Ascending aorta (tissue), 2 donors: ENCODE measurements at regions of chr12 and their contacts with region 1.

Region 1: DNA sequence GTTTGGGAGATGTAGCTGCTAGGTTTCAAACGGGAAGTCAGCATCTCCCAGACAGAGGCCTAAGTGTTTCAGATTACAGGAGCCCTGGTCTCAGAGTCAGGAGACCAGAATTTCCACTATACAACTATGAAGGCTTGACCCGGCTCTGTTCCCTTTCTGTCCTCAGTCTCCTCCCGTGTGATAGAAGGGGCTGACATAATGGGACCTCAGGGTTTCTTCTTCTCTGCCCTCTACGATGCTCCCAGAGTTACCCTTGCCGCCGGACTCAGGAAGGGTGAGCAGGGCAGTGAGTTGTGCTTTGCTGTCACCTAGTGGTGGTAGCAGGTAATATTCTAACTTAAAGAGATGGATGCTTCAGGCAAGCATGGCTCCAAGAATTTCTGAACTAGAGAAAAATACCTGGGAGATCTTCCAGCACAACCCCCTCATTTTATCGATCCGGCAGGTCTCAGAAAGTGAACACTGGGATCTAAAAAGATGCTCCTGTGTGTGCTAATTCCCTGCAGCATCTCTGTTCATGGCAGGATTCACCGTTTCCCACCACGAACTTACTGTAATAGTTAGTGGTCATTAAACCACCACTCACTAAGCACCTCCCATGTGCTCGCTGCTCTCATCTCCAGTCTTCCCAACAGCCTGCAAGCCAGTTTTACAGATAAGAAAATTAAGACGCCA is 84.4 kb downstream of the VWF start:
- DNase-seq: peak in 1 of 2 donors; percentile 78
- H3K4me3 ChIP-seq: no peak overlapping the region
- H3K27ac ChIP-seq: no peak overlapping the region
- H3K4me1 ChIP-seq: no peaks in the 10 kb centered on the region
- H3K27me3 ChIP-seq: no peaks in the 10 kb centered on the region
- CTCF ChIP-seq: peak; percentile 90

Region 2: DNA sequence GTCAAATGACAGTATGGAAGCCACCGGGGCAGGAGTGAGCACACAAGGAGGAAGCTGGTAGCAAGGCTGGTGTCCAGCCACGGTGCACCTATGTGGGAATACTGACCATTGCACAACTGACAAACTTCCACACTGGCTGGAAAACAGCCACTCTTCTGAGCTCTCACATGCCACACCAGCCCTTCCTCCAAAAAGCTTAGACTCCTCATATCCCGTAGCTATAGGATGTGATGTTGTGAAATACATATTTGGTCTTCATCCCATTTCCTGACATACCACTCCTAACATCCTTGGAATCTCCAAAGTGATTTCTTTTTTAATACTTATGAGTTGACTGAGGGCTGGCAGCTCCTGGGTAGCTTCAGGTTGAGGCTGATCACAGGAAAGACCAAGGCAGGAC is 504.5 kb before region 1 on chr12:
- intact Hi-C with region 1: no loop called
- DNase-seq: no peak
- H3K4me3 ChIP-seq: no peak overlapping the region
- H3K27ac ChIP-seq: no peak overlapping the region
- H3K4me1 ChIP-seq: no peaks in the 10 kb centered on the region
- H3K27me3 ChIP-seq: no peaks in the 10 kb centered on the region
- CTCF ChIP-seq: no peak

Region 3: DNA sequence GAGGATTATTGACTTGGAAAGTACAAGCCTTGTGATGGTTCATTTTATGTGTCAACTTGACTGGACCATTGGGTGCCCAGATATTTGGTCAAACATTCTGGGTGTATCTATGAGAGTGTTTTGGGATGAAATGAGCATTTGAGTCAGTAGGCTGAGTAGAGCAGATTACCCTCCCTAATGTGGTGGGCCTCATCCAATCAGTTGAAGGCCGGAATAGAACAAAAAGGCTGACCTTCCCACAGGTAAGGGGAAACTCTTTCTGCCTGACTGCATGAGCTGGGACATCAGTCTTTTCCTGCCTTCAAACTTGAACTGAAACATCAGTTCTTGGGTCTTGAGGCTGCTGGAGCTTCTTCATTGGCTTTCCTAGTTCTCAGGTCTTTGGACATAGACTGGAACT is 193.1 kb before region 1 on chr12:
- intact Hi-C with region 1: no loop called
- DNase-seq: no peak
- H3K4me3 ChIP-seq: no peak overlapping the region
- H3K27ac ChIP-seq: no peak overlapping the region
- H3K4me1 ChIP-seq: no peaks in the 10 kb centered on the region
- H3K27me3 ChIP-seq: no peaks in the 10 kb centered on the region
- CTCF ChIP-seq: no peak

Region 4: DNA sequence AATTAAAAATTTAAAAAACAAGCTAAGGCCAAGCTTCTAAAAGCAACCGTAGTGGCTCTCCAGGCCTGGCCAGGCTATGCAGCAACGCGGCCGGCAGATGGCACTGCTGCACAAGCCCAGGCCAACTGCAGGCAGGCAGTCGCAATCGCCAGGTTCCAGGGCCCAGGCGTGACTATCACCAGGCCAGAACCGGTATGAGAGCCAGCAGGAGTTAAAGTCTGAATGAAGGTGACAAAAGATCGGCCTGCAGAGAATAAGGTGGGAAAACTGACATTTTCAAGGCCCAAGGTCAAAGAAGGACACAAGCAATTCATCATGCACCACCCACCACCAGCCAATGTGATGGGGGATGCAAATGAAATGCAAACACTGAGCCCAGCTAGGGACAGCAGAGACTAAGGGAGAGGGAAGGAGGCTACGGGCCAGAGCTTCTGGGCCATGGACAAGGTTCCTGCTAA is 51.3 kb before region 1 on chr12:
- intact Hi-C with region 1: loop called (anchors 1 kb)
- DNase-seq: peak in 1 of 2 donors; percentile 83
- H3K4me3 ChIP-seq: no peak overlapping the region
- H3K27ac ChIP-seq: no peak overlapping the region
- H3K4me1 ChIP-seq: no peaks in the 10 kb centered on the region
- H3K27me3 ChIP-seq: no peaks in the 10 kb centered on the region
- CTCF ChIP-seq: peak; percentile 90 to 99 (median 97)